ENCODE measurements at regions of chr11 and their contacts with region 1.

Region 1: DNA sequence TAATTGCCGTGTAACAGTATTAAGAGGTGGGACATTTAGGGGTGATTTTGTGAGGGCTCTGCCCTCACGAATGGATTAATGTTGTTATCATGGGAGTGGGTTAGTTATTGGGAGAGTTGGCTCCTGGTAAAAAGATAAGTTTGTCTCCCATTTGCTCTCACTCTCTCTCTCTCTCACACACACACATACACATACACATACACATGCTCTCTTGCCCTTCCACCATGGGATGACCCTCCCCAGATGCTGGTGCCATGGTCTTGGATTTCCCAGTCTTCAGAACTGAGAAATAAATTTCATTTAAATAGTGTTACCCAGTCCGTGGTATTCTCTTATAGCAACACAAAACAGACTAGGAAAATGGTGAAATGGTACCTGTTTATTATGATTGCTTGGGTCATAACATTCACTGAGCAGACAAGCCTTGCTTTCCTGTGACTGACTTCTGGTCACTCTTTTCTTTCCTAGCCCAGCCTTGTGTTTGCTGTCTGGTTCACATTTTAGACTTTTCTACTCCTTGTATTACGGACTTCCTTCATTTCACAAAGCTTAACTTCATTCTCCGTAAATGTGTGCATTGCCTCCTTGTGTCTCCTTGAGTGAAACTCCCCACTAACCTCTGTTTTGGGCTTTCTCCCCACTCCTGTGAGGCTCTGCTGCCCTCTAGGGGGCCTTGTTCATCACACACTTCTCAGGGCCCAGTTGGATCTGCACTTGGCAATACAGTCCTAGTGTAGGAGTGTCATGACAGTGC is 206.5 kb upstream of the CTSC start:
- DNase-seq: peak; percentile 64
- ATAC-seq: peak; percentile 70
- H3K4me3 ChIP-seq: no peak overlapping the region
- H3K4me3 Mint-ChIP-seq: no peak overlapping the region
- H3K27ac ChIP-seq: no peak overlapping the region
- H3K27ac Mint-ChIP-seq: no peak overlapping the region
- H3K4me1 ChIP-seq: no peaks in the 10 kb centered on the region
- H3K4me1 Mint-ChIP-seq: no peaks in the 10 kb centered on the region
- H3K27me3 ChIP-seq: no peaks in the 10 kb centered on the region
- H3K27me3 Mint-ChIP-seq: no peaks in the 10 kb centered on the region
- CTCF ChIP-seq: peak; percentile 87

Region 2: GRCh38 chr11:87722756-87723565 is 821.1 kb before region 1 on chr11:
- CTCF ChIA-PET with region 1: no interaction called
- POLR2A ChIA-PET with region 1: no interaction called
- intact Hi-C with region 1: loop called (anchors 5 kb)
- DNase-seq: no peak
- ATAC-seq: no peak
- H3K4me3 ChIP-seq: no peak overlapping the region
- H3K4me3 Mint-ChIP-seq: no peak overlapping the region
- H3K27ac ChIP-seq: no peak overlapping the region
- H3K27ac Mint-ChIP-seq: no peak overlapping the region
- H3K4me1 ChIP-seq: no peaks in the 10 kb centered on the region
- H3K4me1 Mint-ChIP-seq: no peaks in the 10 kb centered on the region
- H3K27me3 ChIP-seq: no peaks in the 10 kb centered on the region
- H3K27me3 Mint-ChIP-seq: no peaks in the 10 kb centered on the region
- CTCF ChIP-seq: no peak

Region 3: GRCh38 chr11:88016392-88017170 is 527.5 kb before region 1 on chr11:
- CTCF ChIA-PET with region 1: interaction called, 62 read pairs
- POLR2A ChIA-PET with region 1: no interaction called
- intact Hi-C with region 1: loop called (anchors 1 kb)
- DNase-seq: peak; percentile 60
- ATAC-seq: peak; percentile 43
- H3K4me3 ChIP-seq: no peak overlapping the region
- H3K4me3 Mint-ChIP-seq: no peak overlapping the region
- H3K27ac ChIP-seq: no peak overlapping the region
- H3K27ac Mint-ChIP-seq: no peak overlapping the region
- H3K4me1 ChIP-seq: no peaks in the 10 kb centered on the region
- H3K4me1 Mint-ChIP-seq: no peaks in the 10 kb centered on the region
- H3K27me3 ChIP-seq: peaks cover 0 to 3% (median 0%) of the 10 kb centered on the region in 4 experiments
- H3K27me3 Mint-ChIP-seq: peaks cover 3% of the 10 kb centered on the region
- CTCF ChIP-seq: peak; percentile 79

Region 4: DNA sequence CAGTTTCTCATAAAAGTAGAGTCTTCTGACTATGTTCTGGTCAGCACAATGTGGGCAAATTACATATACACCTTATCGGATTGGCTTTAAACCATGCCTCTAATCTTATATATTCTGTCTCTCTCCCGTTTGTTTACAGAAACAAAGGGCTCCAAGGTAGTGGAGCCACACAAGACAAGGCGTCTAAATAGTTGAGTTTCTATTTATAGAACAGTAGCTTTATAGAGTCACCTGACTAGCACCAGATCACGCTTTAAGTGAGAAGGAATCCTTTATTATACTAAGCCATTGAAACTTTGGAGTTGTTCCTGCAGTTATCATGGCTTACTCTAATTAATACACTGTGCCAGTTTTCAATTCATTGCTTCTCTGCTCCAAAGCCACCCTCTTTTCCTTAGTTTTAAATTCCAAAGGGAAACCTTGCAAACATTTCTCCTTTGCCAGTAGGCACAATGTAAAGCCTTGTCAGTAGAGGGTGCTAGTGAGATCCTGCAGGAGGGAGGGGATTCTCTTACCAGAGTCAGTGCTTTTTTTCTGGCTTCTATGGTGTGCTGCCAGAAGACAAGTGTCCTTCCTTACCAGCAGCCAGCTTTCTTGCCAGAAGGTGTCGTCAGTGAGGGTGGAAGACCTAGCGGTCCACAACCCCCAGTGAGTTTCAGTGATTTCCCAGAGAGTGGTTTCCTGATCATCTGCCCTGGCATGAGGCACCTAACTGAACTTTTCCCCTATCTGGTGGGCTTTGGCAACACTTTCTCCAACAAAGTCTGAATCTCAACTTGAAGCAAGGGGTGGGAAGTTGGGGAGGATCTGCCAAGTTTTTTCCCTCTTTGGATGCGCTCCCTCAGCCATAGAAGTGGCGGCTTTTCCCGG is 440.5 kb before region 1 on chr11:
- CTCF ChIA-PET with region 1: interaction called, 3 read pairs
- POLR2A ChIA-PET with region 1: no interaction called
- intact Hi-C with region 1: loop called (anchors 2 kb)
- DNase-seq: peak; percentile 7
- ATAC-seq: no peak
- H3K4me3 ChIP-seq: no peak overlapping the region
- H3K4me3 Mint-ChIP-seq: no peak overlapping the region
- H3K27ac ChIP-seq: no peak overlapping the region
- H3K27ac Mint-ChIP-seq: no peak overlapping the region
- H3K4me1 ChIP-seq: no peaks in the 10 kb centered on the region
- H3K4me1 Mint-ChIP-seq: no peaks in the 10 kb centered on the region
- H3K27me3 ChIP-seq: peaks cover 0 to 4% (median 0%) of the 10 kb centered on the region in 4 experiments
- H3K27me3 Mint-ChIP-seq: no peaks in the 10 kb centered on the region
- CTCF ChIP-seq: peak; percentile 42

Region 5: GRCh38 chr11:88435189-88435814 is 108.8 kb before region 1 on chr11:
- CTCF ChIA-PET with region 1: no interaction called
- POLR2A ChIA-PET with region 1: no interaction called
- intact Hi-C with region 1: no loop called
- DNase-seq: no peak
- ATAC-seq: no peak
- H3K4me3 ChIP-seq: no peak overlapping the region
- H3K4me3 Mint-ChIP-seq: no peak overlapping the region
- H3K27ac ChIP-seq: no peak overlapping the region
- H3K27ac Mint-ChIP-seq: no peak overlapping the region
- H3K4me1 ChIP-seq: no peaks in the 10 kb centered on the region
- H3K4me1 Mint-ChIP-seq: peaks cover 2% of the 10 kb centered on the region
- H3K27me3 ChIP-seq: no peaks in the 10 kb centered on the region
- H3K27me3 Mint-ChIP-seq: no peaks in the 10 kb centered on the region
- CTCF ChIP-seq: no peak

Measured in B cell (primary cell).